ENCODE measurements at regions of chr12 and their contacts with region 1.

Region 1: GRCh38 chr12:51172515-51173431 is at the start of gene TFCP2:
- DNase-seq: peak; percentile 95 to 97 (median 96)
- H3K4me3 ChIP-seq: peak within 1 kb of the TSS; percentile 85
- H3K27ac ChIP-seq: peak within 1 kb of the TSS; percentile 89 to 97
- H3K4me1 ChIP-seq: no peaks in the 10 kb centered on the region
- H3K27me3 ChIP-seq: no peaks in the 10 kb centered on the region
- CTCF ChIP-seq: no peak
- EP300 ChIP-seq: no peak
- POLR2A ChIP-seq: peak; percentile 71
- total RNA-seq, gene TFCP2: 10.5 to 32.0 (median 22.7) TPM

Region 2: GRCh38 chr12:51217968-51218606 is 45.3 kb after region 1 on chr12 and contains the start of gene POU6F1:
- intact Hi-C with region 1: loop called in 1 of 4 experiments (anchors 2 kb)
- DNase-seq: peak; percentile 77 to 86 (median 84)
- H3K4me3 ChIP-seq: peak within 1 kb of the TSS; percentile 64
- H3K27ac ChIP-seq: peak within 1 kb of the TSS; percentile 98 to 99
- H3K4me1 ChIP-seq: peaks cover 11% of the 10 kb centered on the region
- H3K27me3 ChIP-seq: no peaks in the 10 kb centered on the region
- CTCF ChIP-seq: peak; percentile 34 to 39 (median 37)
- EP300 ChIP-seq: peak; percentile 9
- POLR2A ChIP-seq: peak; percentile 52
- total RNA-seq, gene POU6F1: 15.3 to 48.8 (median 30.2) TPM

Region 3: GRCh38 chr12:51238510-51239334 is 65.9 kb after region 1 on chr12 and contains the start of gene DAZAP2:
- intact Hi-C with region 1: loop called in 1 of 4 experiments (anchors 5 kb)
- DNase-seq: peak; percentile 95 to 97 (median 96)
- H3K4me3 ChIP-seq: peak within 1 kb of the TSS; percentile 88
- H3K27ac ChIP-seq: peak within 1 kb of the TSS; percentile 78 to 96
- H3K4me1 ChIP-seq: peaks cover 4% of the 10 kb centered on the region
- H3K27me3 ChIP-seq: no peaks in the 10 kb centered on the region
- CTCF ChIP-seq: peak in 2 of 3 donors; percentile 10 to 37
- EP300 ChIP-seq: no peak
- POLR2A ChIP-seq: peak; percentile 96
- total RNA-seq, gene DAZAP2: 123 to 254 (median 140) TPM

Region 4: DNA sequence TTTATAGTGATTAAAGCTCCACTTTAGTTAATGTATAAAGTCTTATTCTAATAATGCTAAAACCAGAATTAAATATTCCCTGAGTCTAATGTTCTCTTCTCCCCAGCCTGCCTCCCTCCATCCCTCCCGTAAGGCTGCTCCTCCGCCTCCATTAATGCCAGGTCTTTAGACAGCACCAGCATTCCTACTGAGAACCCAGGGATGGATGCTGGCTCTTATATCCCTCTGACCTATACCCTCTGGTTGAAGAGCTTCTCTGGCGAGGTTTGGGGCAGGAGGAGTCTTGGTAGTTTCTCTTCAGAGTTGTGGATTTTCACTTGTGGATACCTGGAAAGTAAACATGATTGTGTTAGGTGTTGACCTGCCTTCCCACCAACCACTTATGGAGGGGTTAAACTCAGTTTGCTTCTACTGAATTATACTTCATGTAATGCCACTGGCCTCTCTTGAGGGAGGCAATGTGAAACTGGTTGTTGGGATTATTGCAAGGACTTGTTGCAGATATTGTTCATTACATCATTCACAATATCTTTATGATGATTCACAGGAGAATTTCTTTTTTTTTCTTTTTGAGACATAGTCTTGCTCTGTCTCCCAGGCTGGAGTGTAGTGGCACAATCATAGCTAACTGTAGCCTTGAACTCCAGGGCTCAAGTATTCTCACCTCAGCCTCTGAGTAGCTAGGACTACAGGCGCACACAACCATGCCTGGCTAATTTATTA is 108.6 kb after region 1 on chr12:
- intact Hi-C with region 1: no loop called
- DNase-seq: no peak
- H3K4me3 ChIP-seq: no peak overlapping the region
- H3K27ac ChIP-seq: no peak overlapping the region
- H3K4me1 ChIP-seq: no peaks in the 10 kb centered on the region
- H3K27me3 ChIP-seq: no peaks in the 10 kb centered on the region
- CTCF ChIP-seq: no peak
- EP300 ChIP-seq: no peak
- POLR2A ChIP-seq: no peak